AG04450 (cell line): ENCODE measurements at regions of chr1 and their contacts with region 1.

Region 1: GRCh38 chr1:100622037-100622436 is 84.1 kb downstream of the GPR88 start:
- DNase-seq: peak; percentile 92
- H3K4me3 ChIP-seq: no peak overlapping the region
- H3K27ac ChIP-seq: peak overlapping the region; percentile 96
- H3K27me3 ChIP-seq: no peaks in the 10 kb centered on the region
- CTCF ChIP-seq: no peak

Region 2: GRCh38 chr1:100530880-100531487 is 91.1 kb before region 1 on chr1:
- CTCF ChIA-PET with region 1: no interaction called
- POLR2A ChIA-PET with region 1: no interaction called
- DNase-seq: peak; percentile 37
- H3K4me3 ChIP-seq: no peak overlapping the region
- H3K27ac ChIP-seq: no peak overlapping the region
- H3K27me3 ChIP-seq: peaks cover 4% of the 10 kb centered on the region
- CTCF ChIP-seq: no peak

Region 3: GRCh38 chr1:100606438-100606837 is 15.6 kb before region 1 on chr1:
- CTCF ChIA-PET with region 1: interaction called, 10 read pairs
- POLR2A ChIA-PET with region 1: interaction called, 4 read pairs
- DNase-seq: no peak
- H3K4me3 ChIP-seq: no peak overlapping the region
- H3K27ac ChIP-seq: no peak overlapping the region
- H3K27me3 ChIP-seq: no peaks in the 10 kb centered on the region
- CTCF ChIP-seq: peak; percentile 84